Pancreas (tissue), 10 donors: ENCODE measurements at regions of chr2 and their contacts with region 1.

Region 1: GRCh38 chr2:241268716-241269442 is 46.6 kb downstream of the HDLBP start:
- DNase-seq: no peak
- ATAC-seq: no peak
- H3K4me3 ChIP-seq: peak overlapping the region in 2 of 4 donors; percentile 94 to 95
- H3K27ac ChIP-seq: no peak overlapping the region
- H3K4me1 ChIP-seq: peaks cover 12 to 29% (median 17%) of the 10 kb centered on the region in 3 donors
- H3K27me3 ChIP-seq: no peaks in the 10 kb centered on the region
- CTCF ChIP-seq: no peak

Region 2: DNA sequence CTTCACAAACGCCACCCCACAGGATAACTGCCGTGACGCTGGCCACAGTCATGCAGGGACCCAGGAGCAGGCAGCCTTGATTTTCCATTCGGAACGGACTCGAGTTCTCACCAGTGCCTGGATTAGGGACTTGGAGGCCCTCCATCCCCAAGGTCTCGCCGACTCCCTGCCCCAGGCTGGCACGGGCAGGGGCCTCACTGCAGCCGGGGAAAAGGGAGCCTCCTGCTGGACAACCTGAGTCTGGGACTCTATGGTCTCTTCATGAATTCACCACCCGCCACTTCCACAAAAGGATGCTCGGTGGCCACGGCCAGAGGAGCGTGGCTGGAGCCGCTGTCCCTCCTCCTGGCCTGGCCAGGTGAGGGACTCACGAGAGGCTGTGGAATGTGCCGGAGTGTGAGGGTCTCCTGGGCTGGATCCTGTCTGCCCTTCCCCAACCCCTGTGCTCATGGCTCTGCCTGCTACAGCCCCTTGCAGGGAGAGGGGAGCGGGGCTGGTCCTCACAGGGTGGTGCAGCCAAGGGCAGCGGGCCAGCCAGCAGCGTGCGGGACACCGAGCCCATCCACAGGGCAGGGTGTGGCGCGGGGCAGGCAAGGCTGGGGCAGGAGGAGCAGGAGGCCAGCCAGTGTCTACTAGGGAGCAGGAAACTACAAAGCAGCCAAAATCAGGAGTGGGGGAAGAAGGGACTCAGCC is 534.9 kb before region 1 on chr2:
- intact Hi-C with region 1: no loop called
- DNase-seq: no peak
- ATAC-seq: no peak
- H3K4me3 ChIP-seq: no peak overlapping the region
- H3K27ac ChIP-seq: no peak overlapping the region
- H3K4me1 ChIP-seq: no peaks in the 10 kb centered on the region
- H3K27me3 ChIP-seq: no peaks in the 10 kb centered on the region
- CTCF ChIP-seq: no peak

Region 3: DNA sequence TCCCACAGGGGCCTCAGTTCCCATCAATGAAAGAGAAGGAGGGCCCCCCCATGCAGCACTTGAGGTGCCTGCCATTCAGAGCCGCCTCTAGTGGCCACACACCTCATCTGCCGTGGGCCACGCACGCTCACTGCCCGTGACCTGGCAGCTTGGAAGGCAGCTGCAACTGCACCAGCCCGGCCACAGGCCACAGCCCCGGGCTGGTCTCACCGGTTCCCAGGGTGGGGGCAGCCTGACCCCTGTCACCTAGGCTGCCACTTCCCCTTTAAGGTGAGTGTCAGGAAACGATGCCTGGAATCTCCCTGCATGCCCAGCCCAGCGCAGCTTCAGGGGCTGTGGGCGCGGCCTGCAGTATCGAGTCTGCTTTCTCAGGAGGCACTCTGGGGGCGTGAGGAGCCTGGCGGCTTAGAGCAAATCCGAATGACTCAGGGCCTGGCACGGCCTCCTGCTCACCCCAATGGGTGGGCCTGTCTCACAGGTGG is 375.5 kb before region 1 on chr2:
- intact Hi-C with region 1: no loop called
- DNase-seq: peak in 2 of 6 donors; percentile 22 to 31
- ATAC-seq: peak in 1 of 4 donors; percentile 30
- H3K4me3 ChIP-seq: no peak overlapping the region
- H3K27ac ChIP-seq: no peak overlapping the region
- H3K4me1 ChIP-seq: peaks cover 0 to 10% (median 7%) of the 10 kb centered on the region in 3 donors
- H3K27me3 ChIP-seq: no peaks in the 10 kb centered on the region
- CTCF ChIP-seq: no peak

Region 4: GRCh38 chr2:241123816-241124536 is 144.9 kb before region 1 on chr2:
- intact Hi-C with region 1: no loop called
- DNase-seq: peak in 4 of 6 donors; percentile 31 to 90 (median 64)
- ATAC-seq: peak in 3 of 4 donors; percentile 78 to 98 (median 92)
- H3K4me3 ChIP-seq: no peak overlapping the region
- H3K27ac ChIP-seq: no peak overlapping the region
- H3K4me1 ChIP-seq: no peaks in the 10 kb centered on the region
- H3K27me3 ChIP-seq: no peaks in the 10 kb centered on the region
- CTCF ChIP-seq: no peak

Region 5: GRCh38 chr2:241339839-241340630 is 71.2 kb after region 1 on chr2:
- intact Hi-C with region 1: loop called in 1 of 3 experiments (anchors 10 kb)
- DNase-seq: no peak
- ATAC-seq: peak; percentile 57 to 65 (median 63)
- H3K4me3 ChIP-seq: no peak overlapping the region
- H3K27ac ChIP-seq: peak overlapping the region in 1 of 4 donors; percentile 15
- H3K4me1 ChIP-seq: peaks cover 6 to 19% (median 9%) of the 10 kb centered on the region in 3 donors
- H3K27me3 ChIP-seq: no peaks in the 10 kb centered on the region
- CTCF ChIP-seq: no peak

Region 6: GRCh38 chr2:241443486-241444223 is 174.8 kb after region 1 on chr2:
- intact Hi-C with region 1: no loop called
- DNase-seq: peak in 1 of 6 donors; percentile 28
- ATAC-seq: no peak
- H3K4me3 ChIP-seq: no peak overlapping the region
- H3K27ac ChIP-seq: no peak overlapping the region
- H3K4me1 ChIP-seq: no peaks in the 10 kb centered on the region
- H3K27me3 ChIP-seq: no peaks in the 10 kb centered on the region
- CTCF ChIP-seq: no peak